Naive thymus-derived CD8-positive, alpha-beta T cell (primary cell): ENCODE measurements at regions of chr12 and their contacts with region 1.

Region 1: DNA sequence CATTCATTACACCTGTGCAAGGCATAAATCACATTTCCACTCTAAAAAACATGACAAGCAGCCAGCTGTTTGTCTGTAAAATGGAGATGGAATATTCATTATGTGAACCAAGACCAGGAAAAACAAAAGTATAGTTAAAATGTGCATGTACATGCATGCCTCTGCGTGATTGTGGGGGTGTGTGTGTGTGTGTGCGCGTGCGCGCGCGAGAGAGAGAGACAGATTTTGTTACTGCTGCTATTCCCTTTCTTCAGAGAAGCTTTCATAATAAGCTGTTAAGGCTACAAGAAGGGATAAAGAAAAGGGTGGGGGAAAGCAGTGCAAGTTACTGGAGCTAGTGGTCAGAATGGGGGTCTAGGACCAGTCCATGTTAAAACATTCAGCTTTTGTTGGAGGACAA is 430.3 kb downstream of the NAV3 start:
- DNase-seq: no peak
- ATAC-seq: no peak
- H3K4me3 Mint-ChIP-seq: no peak overlapping the region
- H3K27ac Mint-ChIP-seq: peak overlapping the region in 1 of 10 donors; percentile 6
- H3K4me1 Mint-ChIP-seq: no peaks in the 10 kb centered on the region
- H3K27me3 Mint-ChIP-seq: peaks cover 0 to 1% (median 0%) of the 10 kb centered on the region in 5 donors

Region 2: DNA sequence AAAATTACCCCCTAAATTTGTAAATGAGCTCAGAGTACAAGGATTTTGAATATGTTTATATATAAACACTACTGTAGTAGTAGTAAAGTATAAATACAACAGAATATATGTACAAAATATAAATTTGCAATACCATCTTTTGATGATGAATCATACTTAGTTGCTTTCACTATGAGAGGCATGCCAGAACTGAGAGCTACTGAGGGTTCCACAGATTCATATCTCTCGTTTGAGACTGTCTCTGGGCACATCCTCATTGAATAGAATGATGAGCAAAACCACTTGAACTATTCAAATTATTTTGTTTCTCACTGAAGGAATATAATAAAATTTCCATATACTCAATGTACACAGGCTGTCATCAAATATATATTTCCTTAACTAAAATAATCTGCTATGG is 12.7 kb before region 1 on chr12:
- POLR2A ChIA-PET with region 1: interaction called, 10 read pairs
- DNase-seq: no peak
- ATAC-seq: no peak
- H3K4me3 Mint-ChIP-seq: no peak overlapping the region
- H3K27ac Mint-ChIP-seq: no peak overlapping the region
- H3K4me1 Mint-ChIP-seq: no peaks in the 10 kb centered on the region
- H3K27me3 Mint-ChIP-seq: peaks cover 0 to 1% (median 0%) of the 10 kb centered on the region in 5 donors